Right ventricle myocardium superior (tissue), 1 donor: ENCODE measurements at regions of chr5 and their contacts with region 1.

Region 1: DNA sequence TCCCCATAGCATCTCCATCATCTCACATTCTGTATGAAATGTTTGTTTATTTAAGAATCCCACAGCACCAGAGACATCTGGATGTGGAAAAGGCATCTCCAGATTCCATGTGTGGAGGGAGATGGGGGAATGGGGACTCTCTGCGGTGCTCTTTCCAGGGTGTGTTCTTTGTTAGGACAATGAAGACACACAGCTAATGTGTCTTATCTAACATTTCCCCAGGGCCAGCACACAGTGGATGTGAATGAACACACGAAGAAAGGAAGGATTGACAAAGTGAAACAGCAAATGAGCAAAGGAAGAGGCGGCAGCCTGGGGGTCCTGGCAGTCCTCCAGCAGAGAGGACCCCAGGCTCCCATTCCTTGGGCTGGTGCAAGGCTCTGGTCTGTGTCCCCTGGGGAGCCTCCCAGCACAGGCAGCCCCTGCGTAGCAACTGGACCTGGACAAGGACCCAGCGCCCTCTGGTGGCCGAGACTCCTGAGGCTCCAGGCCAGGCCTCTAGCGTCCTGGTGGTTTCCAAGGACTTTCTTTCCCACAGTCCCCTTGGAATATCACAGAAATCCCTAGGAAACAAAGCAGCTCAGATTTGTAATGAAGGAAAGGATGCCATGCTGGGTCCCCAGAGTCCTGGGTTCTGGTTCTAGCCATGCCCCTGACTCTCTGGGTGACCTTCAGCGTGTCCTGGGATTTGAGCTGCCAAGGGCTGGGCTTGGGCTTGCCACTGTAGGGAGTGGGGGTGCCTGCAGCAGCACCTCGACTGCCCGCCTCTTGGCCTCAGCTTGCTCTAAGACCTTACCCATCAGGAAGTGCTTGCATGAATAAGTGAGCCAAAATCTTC is 3.5 kb upstream of the PDLIM7 start:
- DNase-seq: peak; percentile 96
- ATAC-seq: peak; percentile 52

Region 2: DNA sequence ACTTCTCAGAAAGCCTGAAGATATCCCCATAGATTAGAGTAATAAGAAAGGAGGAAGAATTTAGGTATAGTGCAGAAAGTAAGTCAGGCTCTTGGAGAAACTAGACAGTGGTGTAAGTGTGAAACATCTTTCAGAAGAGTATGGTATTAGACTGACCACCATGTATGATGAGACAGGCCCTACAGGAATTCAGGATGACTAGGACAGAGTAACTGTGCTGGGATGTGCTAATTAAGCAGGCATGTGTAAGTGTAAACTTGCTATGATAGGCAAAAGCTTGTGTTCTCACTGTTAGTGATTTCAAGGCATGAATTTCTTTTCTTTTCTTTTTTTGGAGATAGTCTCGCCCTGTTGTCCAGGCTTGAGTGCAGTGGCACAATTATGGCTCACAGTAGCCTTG is 268.1 kb before region 1 on chr5:
- intact Hi-C with region 1: no loop called
- DNase-seq: no peak
- ATAC-seq: peak; percentile 50

Region 3: DNA sequence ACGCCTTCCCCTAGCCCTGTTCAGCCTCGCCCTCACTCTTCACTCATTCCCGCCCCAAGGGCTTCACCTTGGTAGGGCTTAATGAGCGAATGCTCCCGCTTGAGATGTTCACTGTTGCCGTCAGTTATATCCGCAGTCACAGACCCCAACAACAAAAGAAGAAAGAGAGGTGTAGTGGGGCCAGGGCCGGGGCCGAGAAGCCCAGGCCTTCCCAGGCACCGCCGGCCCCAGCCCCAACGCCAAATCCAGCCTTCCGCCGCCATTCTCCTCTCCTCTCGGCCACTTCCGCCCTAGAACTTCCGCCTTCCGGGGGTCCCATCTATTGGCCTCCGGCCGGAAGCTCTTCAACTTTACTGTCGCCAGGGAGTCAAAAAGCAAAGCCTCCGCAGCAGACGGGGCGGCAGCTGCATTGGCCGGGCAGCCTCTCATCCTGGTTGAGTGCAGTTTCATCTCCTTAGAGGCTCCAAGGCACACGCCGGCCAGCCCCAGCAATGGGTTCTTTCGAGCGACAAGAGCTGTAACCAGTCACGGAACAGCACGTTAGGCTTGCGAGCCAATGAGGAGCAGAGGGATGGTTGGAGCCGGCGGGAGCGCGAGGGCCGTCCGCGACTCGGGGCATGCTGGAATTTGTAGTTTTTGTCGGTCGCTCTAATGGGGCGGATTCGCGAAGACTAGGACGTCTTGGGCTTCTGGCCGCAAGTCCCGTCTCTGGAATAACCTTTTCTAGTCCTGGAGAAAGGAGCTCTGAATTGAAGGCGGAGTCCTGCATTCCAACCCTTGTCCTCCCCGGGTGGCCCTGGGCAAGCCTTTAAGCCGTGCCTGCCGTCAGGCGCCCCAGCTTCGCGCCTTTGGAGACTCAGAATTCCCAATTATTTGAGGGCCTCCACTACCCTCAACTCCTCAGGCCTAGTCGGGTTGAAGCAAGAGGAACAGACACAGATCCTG is 149.2 kb before region 1 on chr5 and contains the start of gene LMAN2:
- intact Hi-C with region 1: no loop called
- DNase-seq: peak; percentile 95
- ATAC-seq: peak; percentile 99
- total RNA-seq, gene LMAN2: 56.8 TPM

Region 4: DNA sequence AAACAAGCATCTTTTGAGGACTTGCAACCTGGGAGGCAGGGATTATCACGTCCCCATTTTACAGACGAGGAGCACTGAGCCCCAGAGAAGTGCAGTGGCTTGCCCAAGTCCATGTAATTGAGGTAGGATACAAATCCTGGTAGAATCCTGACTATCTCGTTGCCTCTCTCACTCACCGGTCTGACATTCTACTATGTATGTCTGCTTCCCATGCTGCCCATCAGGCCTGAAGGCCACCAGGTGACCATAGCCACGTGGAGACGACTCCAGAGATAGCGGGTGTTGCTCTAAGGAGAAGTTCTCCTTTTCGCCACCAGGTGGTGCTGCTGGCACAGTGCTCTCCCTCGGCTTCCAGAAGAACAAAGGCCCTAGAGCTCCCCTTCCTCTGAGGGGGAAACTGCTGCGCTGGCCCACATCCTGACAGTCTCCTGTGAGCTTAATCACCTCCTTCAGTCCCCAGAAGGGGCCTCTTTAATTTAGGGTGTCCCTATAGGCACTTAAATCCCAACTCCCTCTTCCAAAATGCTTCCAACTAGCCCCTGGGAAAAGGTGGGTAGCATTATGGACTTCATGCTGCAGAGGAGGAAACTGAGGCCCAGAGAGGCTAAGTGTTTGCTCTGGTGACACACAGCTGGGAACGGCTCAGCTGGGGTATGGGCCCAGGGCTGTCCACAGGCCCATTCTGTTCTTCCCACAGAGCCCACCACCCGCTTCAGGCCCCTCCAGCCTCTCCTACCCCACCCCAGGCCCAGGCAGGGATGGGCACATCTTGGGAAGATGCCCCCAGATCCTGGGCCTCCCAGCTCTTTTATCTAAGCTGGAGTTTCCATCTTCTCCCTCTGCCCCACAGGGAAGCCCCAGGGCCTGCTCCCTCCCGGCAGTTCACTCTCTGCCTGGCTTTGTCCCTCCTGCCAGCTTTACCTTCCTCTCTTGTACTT is 110.3 kb before region 1 on chr5:
- intact Hi-C with region 1: loop called (anchors 2 kb)
- DNase-seq: peak; percentile 82
- ATAC-seq: peak; percentile 92

Region 5: GRCh38 chr5:177454397-177455035 is 46.4 kb before region 1 on chr5:
- intact Hi-C with region 1: loop called (anchors 2 kb)
- DNase-seq: peak; percentile 94
- ATAC-seq: peak; percentile 77